AG04450 (cell line): ENCODE measurements at regions of chr6 and their contacts with region 1.

Region 1: GRCh38 chr6:85449818-85450759 is at the start of gene NT5E:
- DNase-seq: no peak
- H3K4me3 ChIP-seq: peak within 1 kb of the TSS; percentile 87
- H3K27ac ChIP-seq: peak within 1 kb of the TSS; percentile 76
- H3K27me3 ChIP-seq: no peaks in the 10 kb centered on the region
- CTCF ChIP-seq: no peak
- polyA plus RNA-seq, gene NT5E: 127 and 164 TPM in 2 replicates

Region 2: DNA sequence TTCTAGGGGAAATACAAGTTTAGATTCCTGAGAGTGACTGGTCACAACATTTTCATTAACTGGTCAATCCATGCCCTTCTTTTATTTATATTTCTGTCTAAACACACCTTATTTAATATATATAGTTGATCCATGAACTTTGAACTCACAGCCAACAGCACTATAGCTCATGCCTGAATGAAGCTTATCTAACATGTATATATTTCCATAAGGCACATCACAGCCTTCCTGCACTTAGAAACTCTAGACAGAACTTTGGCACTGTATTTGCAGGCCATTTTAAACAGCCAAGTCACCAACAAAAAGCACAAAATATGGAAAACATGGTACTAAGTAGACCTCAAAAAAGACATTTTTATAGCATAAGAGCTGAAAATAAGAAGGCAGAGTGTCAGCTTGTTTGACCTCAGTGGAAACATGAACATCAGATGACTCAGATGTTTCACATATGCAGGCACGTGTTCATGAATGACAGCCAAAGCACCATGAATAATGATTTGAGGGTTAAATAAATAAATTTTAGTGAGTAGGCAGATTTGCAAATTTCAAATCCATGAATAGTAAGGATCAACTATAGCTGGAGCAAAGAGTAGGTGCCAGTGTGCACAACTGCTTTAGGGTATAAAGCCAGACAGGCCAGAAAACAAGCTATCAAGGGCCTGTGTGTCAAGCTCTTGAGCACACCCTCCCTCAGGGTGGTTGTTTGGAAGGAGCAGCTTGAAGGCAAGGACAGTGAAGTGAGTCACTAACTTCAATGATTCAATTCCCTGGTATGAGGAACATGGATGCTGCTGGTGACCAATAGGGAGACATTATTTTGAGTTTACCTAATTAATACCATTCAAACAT is 89.1 kb before region 1 on chr6:
- CTCF ChIA-PET with region 1: interaction called, 43 read pairs
- POLR2A ChIA-PET with region 1: interaction called, 31 read pairs
- DNase-seq: peak; percentile 90
- H3K4me3 ChIP-seq: no peak overlapping the region
- H3K27ac ChIP-seq: peak overlapping the region; percentile 62
- H3K27me3 ChIP-seq: no peaks in the 10 kb centered on the region
- CTCF ChIP-seq: no peak

Region 3: GRCh38 chr6:85404502-85405174 is 45.5 kb before region 1 on chr6:
- CTCF ChIA-PET with region 1: interaction called, 4 read pairs
- POLR2A ChIA-PET with region 1: interaction called, 44 read pairs
- DNase-seq: peak; percentile 79
- H3K4me3 ChIP-seq: no peak overlapping the region
- H3K27ac ChIP-seq: peak overlapping the region; percentile 95
- H3K27me3 ChIP-seq: no peaks in the 10 kb centered on the region
- CTCF ChIP-seq: no peak

Region 4: DNA sequence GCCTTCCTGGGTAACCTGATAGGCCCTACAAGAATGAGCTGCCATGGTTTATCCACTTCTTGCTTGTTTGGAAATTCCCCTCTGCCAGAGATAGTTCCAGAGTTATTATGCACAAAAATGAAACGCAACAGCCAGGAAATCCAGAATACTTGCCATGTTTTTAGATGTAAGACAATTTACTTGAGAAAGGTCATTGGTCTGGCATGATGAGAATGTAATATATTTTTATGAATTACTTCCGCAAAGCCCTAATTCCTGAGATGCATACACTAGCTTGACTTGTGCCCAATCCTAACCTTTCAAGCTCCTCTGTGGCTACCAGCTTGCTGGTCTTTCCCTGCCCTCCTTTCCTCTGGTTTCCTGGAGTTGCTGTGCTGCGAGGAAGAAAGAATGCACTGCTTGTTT is 28.1 kb before region 1 on chr6:
- CTCF ChIA-PET with region 1: no interaction called
- POLR2A ChIA-PET with region 1: interaction called, 14 read pairs
- DNase-seq: no peak
- H3K4me3 ChIP-seq: no peak overlapping the region
- H3K27ac ChIP-seq: no peak overlapping the region
- H3K27me3 ChIP-seq: no peaks in the 10 kb centered on the region
- CTCF ChIP-seq: no peak

Region 5: DNA sequence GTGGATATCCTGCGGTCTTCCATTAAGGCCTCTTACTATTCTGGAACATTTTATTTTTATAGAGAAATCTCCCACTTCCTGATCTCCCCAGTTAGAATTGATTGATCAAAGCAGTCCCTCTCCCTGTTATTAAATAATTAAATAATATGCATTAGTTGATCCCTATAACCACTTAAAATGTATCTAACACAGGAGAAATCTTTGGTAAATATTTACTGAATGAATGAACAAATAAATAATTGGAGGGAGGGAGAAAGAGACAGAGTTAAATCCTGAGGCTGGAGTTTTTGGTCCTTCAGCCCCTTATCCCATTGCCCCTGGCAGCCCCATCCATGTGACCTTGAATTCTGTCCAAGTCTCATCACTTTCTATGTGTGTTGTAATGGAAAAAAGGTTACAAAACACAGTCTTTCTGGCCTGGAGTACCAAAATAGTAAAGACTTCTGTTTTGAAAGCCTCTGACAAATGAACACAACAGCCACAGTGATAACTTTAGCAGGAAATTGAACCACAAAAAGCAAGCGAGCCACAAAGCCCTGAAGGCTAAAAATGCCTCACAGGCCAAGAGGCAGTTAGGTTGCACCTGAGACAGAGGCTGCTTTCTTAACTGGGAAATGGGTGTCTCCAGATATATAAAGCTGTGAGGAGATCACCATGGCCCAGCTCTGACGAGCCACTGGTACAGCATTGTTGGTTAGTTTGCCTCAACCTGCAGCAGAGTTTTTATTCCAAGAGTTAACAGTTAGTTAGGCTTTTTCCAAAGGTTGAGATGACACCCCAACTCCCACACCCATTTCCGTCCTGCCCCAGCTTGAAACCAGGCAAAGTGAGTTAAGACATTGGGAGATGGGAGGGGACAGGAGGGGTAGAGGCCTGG is 11.1 kb after region 1 on chr6:
- CTCF ChIA-PET with region 1: interaction called, 7 read pairs
- POLR2A ChIA-PET with region 1: interaction called, 16 read pairs
- DNase-seq: no peak
- H3K4me3 ChIP-seq: no peak overlapping the region
- H3K27ac ChIP-seq: no peak overlapping the region
- H3K27me3 ChIP-seq: no peaks in the 10 kb centered on the region
- CTCF ChIP-seq: no peak

Region 6: DNA sequence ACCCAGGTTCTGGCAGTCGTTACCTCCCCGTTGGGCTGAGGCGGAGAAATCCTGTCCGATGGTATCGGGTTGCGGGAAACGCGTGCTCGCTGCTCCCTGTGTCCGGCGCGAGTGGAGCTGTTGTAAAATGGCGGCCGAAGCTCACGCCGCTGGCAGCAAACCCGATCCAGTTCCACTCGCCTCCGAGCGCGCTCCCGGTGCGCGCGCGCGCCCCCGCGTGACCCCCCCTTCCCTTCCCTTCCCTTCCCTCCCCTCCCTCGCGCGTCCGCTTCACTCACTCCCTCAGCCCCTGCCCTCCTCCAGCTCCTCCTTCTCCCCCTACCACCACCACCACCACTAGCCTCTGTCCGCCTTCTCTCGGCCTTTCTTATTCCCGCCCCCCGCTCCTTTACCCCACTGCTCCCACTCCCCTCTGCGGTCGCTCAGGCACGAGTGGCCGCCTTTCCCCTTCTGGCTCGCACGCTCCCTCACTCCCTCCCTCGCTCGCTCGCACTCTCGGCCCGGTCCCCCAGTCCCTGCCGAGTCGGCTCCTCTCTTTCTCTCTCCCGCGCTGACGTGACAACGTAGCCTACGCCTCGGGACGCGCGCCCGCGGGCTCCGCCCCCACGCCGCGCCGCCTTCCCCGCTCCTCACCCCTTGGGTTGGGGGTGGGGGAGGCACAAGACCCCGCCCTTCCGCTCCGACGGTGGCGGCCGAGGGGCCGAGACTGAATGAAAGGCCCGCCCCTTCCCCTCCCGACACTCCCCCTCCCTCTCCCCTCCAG is 192.9 kb after region 1 on chr6 and contains the start of gene SYNCRIP:
- CTCF ChIA-PET with region 1: no interaction called
- POLR2A ChIA-PET with region 1: interaction called, 10 read pairs
- DNase-seq: peak; percentile 96
- H3K4me3 ChIP-seq: peak within 1 kb of the TSS; percentile 99
- H3K27ac ChIP-seq: peak within 1 kb of the TSS; percentile 100
- H3K27me3 ChIP-seq: no peaks in the 10 kb centered on the region
- CTCF ChIP-seq: no peak
- polyA plus RNA-seq, gene SYNCRIP: 38.5 and 40.4 TPM in 2 replicates